ENCODE measurements at regions of chr16 and their contacts with region 1.

Region 1: DNA sequence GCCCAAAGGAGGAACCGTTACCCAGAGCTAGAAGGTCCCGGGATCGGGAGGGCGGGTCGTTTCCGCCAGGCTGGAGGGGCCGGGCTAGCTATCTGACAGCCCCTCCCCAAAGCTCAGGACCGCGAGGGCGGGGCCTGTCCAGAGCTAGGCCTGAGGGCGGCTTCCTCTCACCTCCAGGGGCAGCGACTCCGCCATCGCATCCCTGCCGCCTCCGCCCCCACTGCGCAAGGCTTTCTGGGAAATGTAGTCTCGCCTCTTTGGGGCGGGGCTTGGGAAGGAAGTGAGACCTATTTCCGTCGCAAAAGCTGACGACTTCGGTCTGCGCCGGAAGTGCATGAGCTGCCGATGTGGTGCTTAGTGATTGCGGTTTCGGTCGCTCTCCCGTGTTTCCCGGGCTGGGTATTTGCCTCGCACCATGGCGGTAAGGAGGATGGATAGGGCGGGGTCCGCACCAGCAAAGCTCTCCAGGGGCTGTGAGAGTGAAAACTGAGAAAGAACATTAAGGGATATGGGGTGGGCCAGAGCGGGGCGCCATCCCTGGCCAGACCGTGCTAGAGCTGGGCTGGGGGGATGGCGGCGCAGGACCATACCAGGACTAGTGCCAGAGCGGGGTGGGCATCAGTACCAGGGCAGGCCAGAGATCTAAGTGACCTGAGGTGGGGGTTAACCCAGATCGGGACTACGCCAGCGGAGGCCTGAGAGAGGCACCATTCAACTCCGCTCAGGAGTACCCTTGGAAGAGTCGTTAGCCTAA is at the start of gene TMEM208:
- DNase-seq: peak; percentile 99
- ATAC-seq: peak; percentile 97
- H3K4me3 ChIP-seq: peak within 1 kb of the TSS; percentile 92
- H3K27ac ChIP-seq: peak within 1 kb of the TSS; percentile 76
- H3K4me1 ChIP-seq: peaks cover 9% of the 10 kb centered on the region
- H3K27me3 ChIP-seq: no peaks in the 10 kb centered on the region
- total RNA-seq, gene TMEM208: 15.4 to 26.2 (median 17.0) TPM

Region 2: GRCh38 chr16:67084345-67085028 is 142.5 kb before region 1 on chr16:
- intact Hi-C with region 1: no loop called
- DNase-seq: no peak
- ATAC-seq: no peak
- H3K4me3 ChIP-seq: no peak overlapping the region
- H3K27ac ChIP-seq: no peak overlapping the region
- H3K4me1 ChIP-seq: no peaks in the 10 kb centered on the region
- H3K27me3 ChIP-seq: no peaks in the 10 kb centered on the region

Region 3: GRCh38 chr16:67104061-67104460 is 122.9 kb before region 1 on chr16:
- intact Hi-C with region 1: no loop called
- DNase-seq: no peak
- ATAC-seq: peak; percentile 53 to 61
- H3K4me3 ChIP-seq: no peak overlapping the region
- H3K27ac ChIP-seq: no peak overlapping the region
- H3K4me1 ChIP-seq: peaks cover 5% of the 10 kb centered on the region
- H3K27me3 ChIP-seq: no peaks in the 10 kb centered on the region

Region 4: DNA sequence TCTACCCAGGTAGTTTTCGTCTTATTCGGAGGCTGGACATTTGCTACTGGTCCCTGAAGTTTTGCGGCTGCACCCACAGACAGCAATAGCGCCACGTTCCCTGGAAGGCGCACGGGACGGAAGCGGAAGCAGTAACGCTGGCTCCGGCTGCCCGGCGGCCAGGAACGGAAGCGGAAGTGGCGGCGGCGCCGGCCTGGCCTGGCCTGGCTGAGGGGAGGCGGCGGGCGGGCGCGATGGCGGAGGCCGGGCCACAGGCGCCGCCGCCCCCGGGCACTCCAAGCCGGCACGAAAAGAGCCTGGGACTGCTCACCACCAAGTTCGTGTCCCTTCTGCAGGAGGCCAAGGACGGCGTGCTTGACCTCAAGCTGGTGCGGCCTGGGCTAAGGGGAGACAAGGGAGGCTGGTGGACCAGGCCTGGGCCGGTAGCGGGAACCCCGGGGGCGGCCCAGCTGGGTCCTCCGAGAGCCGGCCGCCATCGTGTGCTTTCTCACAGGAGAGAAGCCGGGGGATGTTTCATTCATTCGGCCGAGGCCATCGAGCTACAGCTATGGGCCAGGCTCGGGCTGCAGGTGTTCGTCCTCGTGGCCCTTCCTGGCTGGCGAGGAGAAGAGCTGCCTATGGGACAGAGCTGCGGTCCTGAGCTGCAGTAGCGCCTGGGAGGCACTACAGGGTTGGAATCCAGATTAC is 34.8 kb before region 1 on chr16 and contains the start of gene E2F4:
- intact Hi-C with region 1: loop called in 1 of 4 experiments (anchors 5 kb)
- DNase-seq: peak; percentile 92 to 97 (median 96)
- ATAC-seq: peak; percentile 91 to 92
- H3K4me3 ChIP-seq: peak within 1 kb of the TSS; percentile 94
- H3K27ac ChIP-seq: peak within 1 kb of the TSS; percentile 83
- H3K4me1 ChIP-seq: peaks cover 5% of the 10 kb centered on the region
- H3K27me3 ChIP-seq: no peaks in the 10 kb centered on the region
- total RNA-seq, gene E2F4: 36.4 to 42.5 (median 40.5) TPM

Measured in right cardiac atrium (tissue), 5 donors.